Right ventricle myocardium inferior (tissue), 1 donor: ENCODE measurements at regions of chr20 and their contacts with region 1.

Region 1: GRCh38 chr20:11890331-11891080 is 27.2 kb upstream of the BTBD3 start:
- DNase-seq: peak; percentile 93
- ATAC-seq: peak; percentile 98

Region 2: DNA sequence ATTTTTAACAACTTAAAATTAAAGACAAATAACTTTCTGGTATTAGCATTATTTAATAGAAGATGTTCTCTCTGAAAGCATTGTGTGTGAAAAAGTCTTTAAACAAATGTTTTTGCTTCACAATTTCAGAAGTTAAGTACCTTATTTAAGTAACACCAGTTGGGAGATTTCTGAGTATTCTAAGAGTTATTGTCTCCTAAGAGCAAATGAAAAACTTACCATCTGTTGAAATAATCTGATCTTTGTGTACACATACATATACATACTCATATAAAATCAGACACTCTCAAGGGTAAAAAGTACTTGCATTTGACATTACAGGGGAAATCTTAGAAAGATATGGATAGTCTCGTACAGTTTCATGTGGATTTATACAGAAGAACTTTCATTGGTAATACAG is 29.6 kb after region 1 on chr20:
- intact Hi-C with region 1: loop called (anchors 1 kb)
- DNase-seq: no peak
- ATAC-seq: no peak

Region 3: GRCh38 chr20:12171923-12172534 is 281.5 kb after region 1 on chr20:
- intact Hi-C with region 1: loop called (anchors 10 kb)
- DNase-seq: no peak
- ATAC-seq: peak; percentile 78